IMR-90 (cell line): ENCODE measurements at regions of chr4 and their contacts with region 1.

Region 1: GRCh38 chr4:153207567-153207966 is 3.3 kb downstream of the TRIM2 start:
- DNase-seq: peak; percentile 24
- ATAC-seq: peak; percentile 63
- H3K4me3 ChIP-seq: no peak overlapping the region
- H3K27ac ChIP-seq: no peak overlapping the region
- H3K4me1 ChIP-seq: peaks cover 4% of the 10 kb centered on the region
- H3K27me3 ChIP-seq: no peaks in the 10 kb centered on the region
- CTCF ChIP-seq: peak; percentile 51
- POLR2A ChIP-seq: no peak
- RAD21 ChIP-seq: peak; percentile 56

Region 2: GRCh38 chr4:153276971-153277370 is 69.4 kb after region 1 on chr4:
- CTCF ChIA-PET with region 1: no interaction called
- POLR2A ChIA-PET with region 1: no interaction called
- dilution Hi-C with region 1: no loop called
- in situ Hi-C with region 1: no loop called
- intact Hi-C with region 1: no loop called
- DNase-seq: no peak
- ATAC-seq: no peak
- H3K4me3 ChIP-seq: no peak overlapping the region
- H3K27ac ChIP-seq: no peak overlapping the region
- H3K4me1 ChIP-seq: peaks cover 2% of the 10 kb centered on the region; the same call in 1 of the 2 replicates
- H3K27me3 ChIP-seq: no peaks in the 10 kb centered on the region
- CTCF ChIP-seq: no peak
- POLR2A ChIP-seq: no peak
- RAD21 ChIP-seq: no peak

Region 3: DNA sequence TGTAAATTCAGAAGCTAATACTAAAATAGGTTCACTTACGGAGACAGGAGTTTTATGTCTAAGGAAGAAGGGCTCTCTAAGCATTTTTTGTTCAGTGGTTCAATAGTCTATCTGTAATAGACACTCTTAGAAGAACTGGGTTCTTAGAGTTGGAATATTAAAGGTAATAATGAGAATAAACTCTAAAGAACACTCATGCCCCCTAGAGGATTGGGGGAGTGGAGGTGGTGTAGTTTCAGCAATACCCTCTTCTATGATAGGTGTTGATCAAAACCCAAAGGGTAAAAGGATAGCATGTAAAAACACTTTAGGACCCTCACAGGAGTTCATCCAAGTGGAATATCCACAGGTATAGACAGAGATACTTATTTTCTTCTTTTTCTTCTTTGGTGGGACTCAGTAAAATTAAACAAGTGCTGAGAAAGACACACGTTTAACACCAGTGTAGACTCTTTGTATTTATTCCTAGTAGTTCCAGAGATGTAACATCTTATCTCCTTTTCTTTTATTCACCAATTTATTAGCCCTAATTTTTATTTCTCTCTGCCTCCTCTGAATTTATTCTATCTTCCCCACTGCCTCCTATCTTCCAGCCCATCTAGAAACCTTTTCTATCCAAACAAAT is 111.2 kb after region 1 on chr4:
- CTCF ChIA-PET with region 1: no interaction called
- POLR2A ChIA-PET with region 1: no interaction called
- dilution Hi-C with region 1: no loop called
- in situ Hi-C with region 1: no loop called
- intact Hi-C with region 1: loop called (anchors 1 kb)
- DNase-seq: peak; percentile 54
- ATAC-seq: peak; percentile 90
- H3K4me3 ChIP-seq: no peak overlapping the region
- H3K27ac ChIP-seq: no peak overlapping the region
- H3K4me1 ChIP-seq: no peaks in the 10 kb centered on the region
- H3K27me3 ChIP-seq: no peaks in the 10 kb centered on the region
- CTCF ChIP-seq: peak; percentile 80
- POLR2A ChIP-seq: no peak
- RAD21 ChIP-seq: peak; percentile 84